Activated CD4-positive, alpha-beta memory T cell treated with anti-CD3 and anti-CD28 coated beads for 36 hours (primary cell): ENCODE measurements at regions of chr10 and their contacts with region 1.

Region 1: DNA sequence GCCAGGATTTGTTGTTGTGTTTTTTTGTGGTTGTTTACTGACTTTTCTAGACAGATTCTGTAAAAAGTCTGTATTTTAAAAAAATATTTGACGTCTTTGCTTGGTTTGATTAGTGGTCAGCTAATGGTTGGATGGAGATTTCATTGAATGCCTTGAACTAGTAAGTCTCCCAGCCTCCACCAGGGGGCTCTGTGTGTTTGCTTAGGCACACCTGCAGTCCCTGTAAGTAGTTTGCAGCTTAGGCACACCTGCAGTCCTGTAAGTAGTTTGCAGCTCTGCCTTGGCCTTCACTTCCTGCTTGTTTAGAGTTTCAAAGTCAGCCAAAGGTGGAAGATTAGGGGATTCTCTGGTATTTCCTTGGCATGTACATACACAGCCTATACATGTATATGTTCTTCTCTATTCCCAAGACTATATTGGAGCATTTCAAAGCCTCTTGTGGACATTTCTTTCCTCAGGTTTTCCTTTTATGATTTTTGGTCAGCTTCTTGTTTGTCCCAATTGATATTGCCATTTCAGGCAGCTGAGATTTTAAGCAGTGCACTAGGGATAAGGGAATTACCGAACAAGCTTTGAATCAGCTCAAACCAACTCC is 101.6 kb downstream of the CCSER2 start:
- DNase-seq: peak; percentile 76
- H3K4me3 Mint-ChIP-seq: no peak overlapping the region
- H3K27ac Mint-ChIP-seq: no peak overlapping the region
- H3K4me1 Mint-ChIP-seq: peaks cover 31% of the 10 kb centered on the region
- H3K27me3 Mint-ChIP-seq: no peaks in the 10 kb centered on the region

Region 2: GRCh38 chr10:84375011-84375410 is 55.0 kb before region 1 on chr10:
- CTCF ChIA-PET with region 1: interaction called, 15 read pairs
- POLR2A ChIA-PET with region 1: no interaction called
- intact Hi-C with region 1: loop called (anchors 2 kb)
- DNase-seq: peak; percentile 18
- H3K4me3 Mint-ChIP-seq: no peak overlapping the region
- H3K27ac Mint-ChIP-seq: peak overlapping the region; percentile 65
- H3K4me1 Mint-ChIP-seq: peaks cover 51% of the 10 kb centered on the region
- H3K27me3 Mint-ChIP-seq: no peaks in the 10 kb centered on the region

Region 3: GRCh38 chr10:84412482-84412881 is 17.5 kb before region 1 on chr10:
- CTCF ChIA-PET with region 1: interaction called, 28 read pairs
- POLR2A ChIA-PET with region 1: no interaction called
- intact Hi-C with region 1: no loop called
- DNase-seq: no peak
- H3K4me3 Mint-ChIP-seq: no peak overlapping the region
- H3K27ac Mint-ChIP-seq: no peak overlapping the region
- H3K4me1 Mint-ChIP-seq: peaks cover 29% of the 10 kb centered on the region
- H3K27me3 Mint-ChIP-seq: no peaks in the 10 kb centered on the region

Region 4: DNA sequence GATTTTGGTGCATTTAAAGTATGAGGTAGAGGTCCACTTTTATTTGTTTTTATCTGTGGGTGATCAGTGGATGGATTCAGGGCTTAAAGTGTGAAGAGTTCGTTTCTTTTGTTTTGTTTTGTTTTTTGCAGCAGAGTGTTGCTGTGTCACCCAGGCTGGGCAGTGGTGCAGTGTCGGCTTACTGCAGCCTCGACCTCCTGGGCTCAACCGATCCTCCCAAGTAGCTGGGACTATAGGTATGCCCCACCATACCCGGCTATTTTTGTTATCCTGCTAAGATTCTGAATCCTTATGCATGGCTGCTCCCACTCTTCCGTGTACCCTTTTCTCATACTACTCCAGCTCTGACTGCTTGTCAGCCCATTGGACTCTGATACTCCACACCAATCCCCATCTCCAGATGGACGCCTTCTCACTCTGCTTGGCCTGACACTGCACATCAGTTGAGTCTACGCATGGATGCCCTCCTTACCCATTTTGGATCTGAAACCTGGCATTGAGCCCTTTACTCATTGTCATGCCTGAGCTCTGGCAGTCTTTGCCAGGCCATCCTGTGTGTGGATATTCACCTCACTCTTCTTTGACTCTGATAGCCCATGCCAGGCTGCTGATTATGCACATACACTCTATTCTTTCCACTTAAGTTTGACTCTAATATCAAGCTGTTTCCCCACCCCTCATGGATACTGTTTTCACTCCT is 17.8 kb after region 1 on chr10:
- CTCF ChIA-PET with region 1: interaction called, 11 read pairs
- POLR2A ChIA-PET with region 1: no interaction called
- intact Hi-C with region 1: no loop called
- DNase-seq: no peak
- H3K4me3 Mint-ChIP-seq: no peak overlapping the region
- H3K27ac Mint-ChIP-seq: no peak overlapping the region
- H3K4me1 Mint-ChIP-seq: no peaks in the 10 kb centered on the region
- H3K27me3 Mint-ChIP-seq: no peaks in the 10 kb centered on the region

Region 5: DNA sequence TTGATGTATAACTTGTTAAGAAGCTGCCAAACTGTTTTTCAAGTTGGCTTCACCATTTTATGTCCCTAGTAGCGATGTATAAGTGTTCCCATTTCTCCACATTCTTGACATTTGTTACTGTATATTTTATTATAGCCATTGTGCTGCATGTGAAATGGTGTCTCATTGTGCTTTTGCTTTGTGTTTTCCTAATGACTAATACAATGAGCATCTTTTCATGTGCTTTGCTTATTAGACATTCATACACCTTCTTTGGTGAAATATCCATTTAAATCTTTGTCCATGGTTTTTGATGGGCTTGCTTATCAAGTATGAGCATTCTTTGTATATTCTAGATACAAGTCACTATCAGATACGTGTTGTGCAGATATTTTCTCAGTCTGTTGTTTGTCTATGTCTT is 101.4 kb after region 1 on chr10:
- CTCF ChIA-PET with region 1: interaction called, 90 read pairs
- POLR2A ChIA-PET with region 1: no interaction called
- intact Hi-C with region 1: no loop called
- DNase-seq: no peak
- H3K4me3 Mint-ChIP-seq: no peak overlapping the region
- H3K27ac Mint-ChIP-seq: no peak overlapping the region
- H3K4me1 Mint-ChIP-seq: peaks cover 17% of the 10 kb centered on the region
- H3K27me3 Mint-ChIP-seq: no peaks in the 10 kb centered on the region